ENCODE measurements at regions of chr3 and their contacts with region 1.

Region 1: GRCh38 chr3:123449102-123449996 is 459 bp upstream of the ADCY5 start:
- DNase-seq: peak; percentile 58 to 80 (median 61)
- ATAC-seq: peak in 3 of 4 donors; percentile 38 to 71 (median 58)
- H3K4me3 ChIP-seq: peak overlapping the region; percentile 61 to 92 (median 78)
- H3K27ac ChIP-seq: peak overlapping the region; percentile 80 to 97 (median 93)
- H3K4me1 ChIP-seq: peaks cover 0 to 38% (median 11%) of the 10 kb centered on the region in 12 donors
- H3K27me3 ChIP-seq: peaks cover 0 to 52% (median 7%) of the 10 kb centered on the region in 9 donors
- CTCF ChIP-seq: no peak
- POLR2A ChIP-seq: peak in 1 of 2 donors; percentile 32

Region 2: DNA sequence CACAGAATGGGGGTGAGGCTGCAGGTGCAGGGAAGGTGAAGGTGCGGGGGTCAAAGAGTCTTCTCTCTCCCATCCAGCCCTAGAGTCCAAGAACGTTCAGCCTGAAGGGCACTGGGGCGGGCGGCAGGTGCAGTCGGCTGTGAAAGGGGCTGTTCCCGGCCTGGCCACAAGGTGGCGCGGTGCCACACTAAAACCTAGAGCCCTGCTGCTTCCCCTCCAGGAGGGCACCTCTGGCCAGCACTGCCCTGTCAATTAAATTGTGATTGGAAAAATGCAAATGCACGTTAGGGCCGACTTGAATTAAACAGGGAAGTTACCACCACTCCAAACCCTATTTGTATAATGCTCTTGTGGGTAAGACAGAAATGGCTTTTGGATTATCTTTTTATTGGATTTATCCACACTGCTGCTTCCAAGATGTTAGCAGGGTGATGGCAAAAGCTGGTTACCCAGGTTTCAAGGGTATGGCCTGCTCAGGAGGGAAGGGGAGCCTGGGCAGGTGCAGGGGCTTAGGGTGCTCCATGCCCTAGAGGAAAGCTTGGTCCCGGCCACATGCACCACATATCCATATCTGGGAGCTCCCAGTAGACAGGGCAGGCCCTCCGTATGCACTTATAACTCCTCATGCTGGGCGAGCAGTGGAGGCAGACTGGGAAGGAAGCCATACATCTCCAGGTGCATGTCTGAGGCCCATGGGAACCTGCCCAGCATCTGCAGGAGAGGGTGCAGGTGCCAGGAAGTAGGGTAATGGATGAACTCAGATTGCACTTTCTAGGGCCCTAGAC is 120.3 kb before region 1 on chr3:
- intact Hi-C with region 1: loop called in 7 of 10 experiments (anchors 2 to 5 kb)
- DNase-seq: peak; percentile 68 to 86 (median 82)
- ATAC-seq: peak; percentile 30 to 58 (median 52)
- H3K4me3 ChIP-seq: no peak overlapping the region
- H3K27ac ChIP-seq: peak overlapping the region in 11 of 12 donors; percentile 33 to 97 (median 89)
- H3K4me1 ChIP-seq: peaks cover 0 to 88% (median 32%) of the 10 kb centered on the region in 12 donors
- H3K27me3 ChIP-seq: no peaks in the 10 kb centered on the region
- CTCF ChIP-seq: peak; percentile 87 to 97 (median 96)
- POLR2A ChIP-seq: no peak

Region 3: DNA sequence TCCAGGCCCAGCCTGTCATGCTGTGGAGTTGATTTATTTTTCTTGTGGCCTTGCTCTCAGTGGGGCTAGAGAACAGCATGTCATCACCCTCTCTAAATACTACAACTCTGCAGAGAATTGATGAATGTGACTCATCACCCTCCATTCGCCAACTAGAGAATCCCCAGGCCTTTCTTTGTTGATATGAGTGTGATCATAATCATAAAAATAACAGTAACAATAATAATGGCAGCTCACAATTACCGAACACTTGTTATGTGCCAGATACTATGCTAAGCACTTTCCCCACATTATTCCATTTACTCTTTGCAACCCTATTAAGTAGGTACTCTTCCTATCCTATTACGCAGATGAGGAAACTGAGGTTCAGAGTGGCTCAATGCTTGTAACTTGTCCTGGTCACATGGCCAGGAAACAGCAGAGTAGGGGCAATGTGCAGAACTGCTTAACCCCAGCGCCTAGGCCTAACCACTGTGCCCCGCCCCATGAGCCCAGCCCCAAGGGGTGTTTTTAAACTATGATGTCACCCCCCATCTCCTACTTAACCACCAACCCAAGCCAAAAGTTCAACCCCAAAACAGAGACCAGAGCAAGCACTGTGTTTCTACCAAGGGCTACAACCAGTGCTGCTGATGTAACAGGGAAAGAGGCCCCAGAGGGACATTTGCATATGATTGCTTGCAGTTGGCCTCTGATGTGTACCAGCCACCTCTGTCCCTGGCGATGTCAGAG is 105.0 kb before region 1 on chr3:
- intact Hi-C with region 1: loop called in 5 of 10 experiments (anchors 5 kb)
- DNase-seq: peak in 1 of 5 donors; percentile 13
- ATAC-seq: peak in 3 of 4 donors; percentile 4 to 24 (median 13)
- H3K4me3 ChIP-seq: no peak overlapping the region
- H3K27ac ChIP-seq: peak overlapping the region; percentile 8 to 94 (median 78)
- H3K4me1 ChIP-seq: peaks cover 4 to 97% (median 57%) of the 10 kb centered on the region in 12 donors
- H3K27me3 ChIP-seq: no peaks in the 10 kb centered on the region
- CTCF ChIP-seq: no peak
- POLR2A ChIP-seq: no peak

Region 4: DNA sequence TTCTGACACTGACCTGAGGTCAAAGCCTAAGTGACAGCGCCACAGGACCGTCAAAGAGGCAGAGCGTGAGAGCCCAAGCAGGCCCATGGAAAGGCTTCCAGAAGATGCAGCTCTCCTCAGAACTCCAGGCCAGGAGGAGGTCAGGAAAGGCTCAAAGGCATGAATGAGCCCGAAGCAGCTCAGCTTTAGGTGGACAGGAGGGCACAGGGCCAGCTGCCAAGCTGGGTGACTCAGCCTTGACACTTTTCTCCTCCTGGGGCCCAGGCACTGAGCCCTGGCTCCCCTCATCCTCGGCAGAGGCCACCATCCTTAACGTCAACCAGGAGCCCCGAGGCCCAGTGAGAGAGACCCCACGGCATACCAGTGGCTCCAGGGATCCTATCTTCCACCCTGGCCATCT is 63.4 kb before region 1 on chr3:
- intact Hi-C with region 1: loop called in 2 of 10 experiments (anchors 5 kb)
- DNase-seq: peak in 4 of 5 donors; percentile 68 to 85 (median 74)
- ATAC-seq: peak; percentile 39 to 71 (median 60)
- H3K4me3 ChIP-seq: peak overlapping the region in 5 of 12 donors; percentile 8 to 45 (median 13)
- H3K27ac ChIP-seq: peak overlapping the region; percentile 72 to 94 (median 90)
- H3K4me1 ChIP-seq: peaks cover 4 to 100% (median 67%) of the 10 kb centered on the region in 12 donors
- H3K27me3 ChIP-seq: no peaks in the 10 kb centered on the region
- CTCF ChIP-seq: no peak
- POLR2A ChIP-seq: no peak

Region 5: GRCh38 chr3:123412811-123413604 is 36.3 kb before region 1 on chr3:
- intact Hi-C with region 1: loop called in 4 of 10 experiments (anchors 5 kb)
- DNase-seq: peak; percentile 71 to 83 (median 76)
- ATAC-seq: peak; percentile 79 to 89 (median 84)
- H3K4me3 ChIP-seq: peak overlapping the region in 6 of 12 donors; percentile 0 to 34 (median 22)
- H3K27ac ChIP-seq: peak overlapping the region; percentile 74 to 94 (median 89)
- H3K4me1 ChIP-seq: peaks cover 5 to 98% (median 62%) of the 10 kb centered on the region in 12 donors
- H3K27me3 ChIP-seq: no peaks in the 10 kb centered on the region
- CTCF ChIP-seq: peak in 1 of 12 donors; percentile 14
- POLR2A ChIP-seq: no peak

Region 6: DNA sequence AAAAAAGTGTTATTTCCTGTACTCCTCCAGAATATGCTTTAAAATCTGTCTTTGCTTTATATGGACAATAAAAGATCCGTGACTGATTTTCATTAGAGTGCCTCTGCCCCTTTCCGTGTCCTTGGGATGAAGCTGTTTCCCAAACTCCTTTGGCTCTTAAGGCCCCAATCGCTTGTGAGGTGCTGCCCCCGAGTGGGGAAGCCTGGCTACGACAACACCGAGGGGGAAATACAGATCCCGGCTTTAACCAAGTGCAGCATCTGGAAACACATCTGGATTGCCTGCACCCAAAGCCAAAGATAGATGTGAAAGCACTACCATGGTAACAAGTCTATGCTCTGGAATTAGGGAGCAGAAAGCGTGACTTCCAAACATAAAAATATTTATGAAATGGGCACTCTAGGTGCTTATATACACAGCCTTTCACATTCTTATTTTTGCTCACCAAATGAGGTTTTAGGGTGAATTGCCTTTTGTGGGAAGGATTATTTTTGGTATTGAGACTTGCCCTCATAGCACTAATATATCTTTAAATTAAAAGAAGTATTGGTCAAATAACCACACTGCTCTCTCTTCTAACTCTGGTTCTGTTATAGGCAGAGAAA is 40.2 kb after region 1 on chr3:
- intact Hi-C with region 1: loop called in 8 of 10 experiments (anchors 2 to 5 kb)
- DNase-seq: peak; percentile 64 to 82 (median 73)
- ATAC-seq: peak; percentile 64 to 85 (median 78)
- H3K4me3 ChIP-seq: peak overlapping the region in 1 of 12 donors; percentile 4
- H3K27ac ChIP-seq: peak overlapping the region in 10 of 12 donors; percentile 34 to 83 (median 67)
- H3K4me1 ChIP-seq: peaks cover 0 to 39% (median 9%) of the 10 kb centered on the region in 12 donors
- H3K27me3 ChIP-seq: no peaks in the 10 kb centered on the region
- CTCF ChIP-seq: peak; percentile 70 to 92 (median 86)
- POLR2A ChIP-seq: no peak